MCF 10A (cell line): ENCODE measurements at regions of chr6 and their contacts with region 1.

Region 1: DNA sequence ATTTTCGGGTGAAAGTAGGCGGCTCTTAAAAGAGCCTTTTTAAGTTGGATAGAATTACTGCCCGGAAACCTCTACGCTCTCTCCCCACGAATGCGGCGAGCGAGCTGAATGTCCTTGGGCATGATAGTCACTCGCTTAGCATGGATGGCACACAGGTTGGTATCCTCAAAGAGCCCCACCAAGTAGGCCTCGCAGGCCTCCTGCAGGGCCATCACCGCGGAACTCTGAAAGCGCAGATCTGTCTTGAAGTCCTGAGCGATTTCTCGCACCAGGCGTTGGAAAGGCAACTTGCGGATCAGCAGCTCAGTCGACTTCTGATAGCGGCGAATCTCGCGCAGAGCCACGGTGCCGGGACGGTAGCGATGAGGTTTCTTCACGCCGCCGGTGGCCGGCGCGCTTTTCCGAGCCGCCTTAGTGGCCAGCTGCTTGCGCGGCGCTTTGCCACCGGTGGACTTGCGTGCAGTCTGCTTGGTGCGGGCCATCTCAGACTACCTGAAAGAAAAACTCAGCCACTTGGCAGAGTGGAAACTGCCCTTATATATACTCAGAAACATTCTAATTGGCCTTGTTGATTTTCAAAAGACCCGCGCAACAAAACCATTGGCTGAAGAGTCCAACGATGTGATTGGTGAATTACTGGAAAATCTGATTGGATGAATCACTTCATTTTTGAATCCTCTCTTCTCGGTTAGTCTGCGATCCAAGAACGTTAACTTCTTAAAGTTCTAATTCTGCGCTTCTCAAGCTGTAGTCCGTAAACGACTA is 93.9 kb upstream of the BTN3A2 start:
- DNase-seq: peak; percentile 97
- H3K4me3 Mint-ChIP-seq: no peak overlapping the region
- H3K27ac Mint-ChIP-seq: peak overlapping the region; percentile 54
- H3K4me1 Mint-ChIP-seq: peaks cover 6% of the 10 kb centered on the region
- H3K27me3 Mint-ChIP-seq: no peaks in the 10 kb centered on the region
- CTCF ChIP-seq: no peak

Region 2: GRCh38 chr6:26045065-26045927 is 225.8 kb before region 1 on chr6:
- CTCF ChIA-PET with region 1: no interaction called
- POLR2A ChIA-PET with region 1: interaction called, 13 read pairs
- intact Hi-C with region 1: no loop called
- DNase-seq: peak; percentile 95
- H3K4me3 Mint-ChIP-seq: peak overlapping the region; percentile 80
- H3K27ac Mint-ChIP-seq: peak overlapping the region; percentile 86
- H3K4me1 Mint-ChIP-seq: peaks cover 16% of the 10 kb centered on the region
- H3K27me3 Mint-ChIP-seq: no peaks in the 10 kb centered on the region
- CTCF ChIP-seq: no peak

Region 3: GRCh38 chr6:26196846-26197648 is 74.0 kb before region 1 on chr6:
- CTCF ChIA-PET with region 1: interaction called, 4 read pairs
- POLR2A ChIA-PET with region 1: interaction called, 245 read pairs
- intact Hi-C with region 1: no loop called
- DNase-seq: peak; percentile 94
- H3K4me3 Mint-ChIP-seq: peak overlapping the region; percentile 93
- H3K27ac Mint-ChIP-seq: peak overlapping the region; percentile 96
- H3K4me1 Mint-ChIP-seq: peaks cover 28% of the 10 kb centered on the region
- H3K27me3 Mint-ChIP-seq: no peaks in the 10 kb centered on the region
- CTCF ChIP-seq: no peak

Region 4: GRCh38 chr6:26243132-26243531 is 28.0 kb before region 1 on chr6:
- CTCF ChIA-PET with region 1: interaction called, 15 read pairs
- POLR2A ChIA-PET with region 1: interaction called, 197 read pairs
- intact Hi-C with region 1: no loop called
- DNase-seq: peak; percentile 14
- H3K4me3 Mint-ChIP-seq: no peak overlapping the region
- H3K27ac Mint-ChIP-seq: no peak overlapping the region
- H3K4me1 Mint-ChIP-seq: no peaks in the 10 kb centered on the region
- H3K27me3 Mint-ChIP-seq: no peaks in the 10 kb centered on the region
- CTCF ChIP-seq: no peak

Region 5: DNA sequence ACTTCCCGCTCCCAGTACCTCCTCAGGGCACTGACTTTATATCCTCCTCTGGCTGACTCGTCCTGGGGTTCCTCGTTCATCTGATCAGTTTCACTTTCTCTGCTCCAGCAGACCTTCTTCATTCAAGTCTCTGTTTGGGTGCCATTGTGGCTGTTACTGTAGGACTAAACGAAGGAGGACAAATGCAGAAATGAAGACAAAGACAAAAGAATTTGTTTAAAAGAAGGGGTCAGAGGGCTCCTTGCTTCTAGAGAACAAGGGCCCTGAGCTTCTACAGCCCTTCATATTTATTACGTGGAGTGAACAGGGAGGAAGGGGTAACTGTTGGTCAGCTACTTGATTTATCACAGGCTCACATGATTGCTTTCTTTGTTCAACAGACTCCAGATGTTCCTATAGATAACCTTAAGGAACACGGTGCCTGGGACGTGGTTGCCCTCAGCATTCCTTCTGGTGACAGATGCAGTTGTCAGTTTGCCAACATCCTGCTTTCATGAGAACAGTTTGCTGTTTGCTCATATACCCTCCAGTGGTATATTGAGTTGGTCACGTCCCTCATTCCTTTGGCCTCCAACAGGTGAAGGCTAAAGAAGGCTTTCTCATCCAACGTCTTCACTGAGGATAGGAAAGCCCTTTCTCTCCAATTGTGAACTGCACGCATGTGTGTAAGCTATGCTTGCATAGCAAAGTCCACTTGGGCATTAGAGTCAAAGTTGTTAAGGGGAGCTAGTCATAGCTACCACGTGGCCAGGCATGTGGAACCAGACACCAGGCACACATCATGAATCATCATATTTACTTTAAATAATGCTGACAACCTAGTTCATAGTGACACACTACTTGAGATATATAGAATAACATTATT is 24.8 kb after region 1 on chr6:
- CTCF ChIA-PET with region 1: interaction called, 4 read pairs
- POLR2A ChIA-PET with region 1: interaction called, 32 read pairs
- intact Hi-C with region 1: no loop called
- DNase-seq: peak; percentile 87
- H3K4me3 Mint-ChIP-seq: peak overlapping the region; percentile 63
- H3K27ac Mint-ChIP-seq: peak overlapping the region; percentile 81
- H3K4me1 Mint-ChIP-seq: peaks cover 22% of the 10 kb centered on the region
- H3K27me3 Mint-ChIP-seq: no peaks in the 10 kb centered on the region
- CTCF ChIP-seq: no peak

Region 6: DNA sequence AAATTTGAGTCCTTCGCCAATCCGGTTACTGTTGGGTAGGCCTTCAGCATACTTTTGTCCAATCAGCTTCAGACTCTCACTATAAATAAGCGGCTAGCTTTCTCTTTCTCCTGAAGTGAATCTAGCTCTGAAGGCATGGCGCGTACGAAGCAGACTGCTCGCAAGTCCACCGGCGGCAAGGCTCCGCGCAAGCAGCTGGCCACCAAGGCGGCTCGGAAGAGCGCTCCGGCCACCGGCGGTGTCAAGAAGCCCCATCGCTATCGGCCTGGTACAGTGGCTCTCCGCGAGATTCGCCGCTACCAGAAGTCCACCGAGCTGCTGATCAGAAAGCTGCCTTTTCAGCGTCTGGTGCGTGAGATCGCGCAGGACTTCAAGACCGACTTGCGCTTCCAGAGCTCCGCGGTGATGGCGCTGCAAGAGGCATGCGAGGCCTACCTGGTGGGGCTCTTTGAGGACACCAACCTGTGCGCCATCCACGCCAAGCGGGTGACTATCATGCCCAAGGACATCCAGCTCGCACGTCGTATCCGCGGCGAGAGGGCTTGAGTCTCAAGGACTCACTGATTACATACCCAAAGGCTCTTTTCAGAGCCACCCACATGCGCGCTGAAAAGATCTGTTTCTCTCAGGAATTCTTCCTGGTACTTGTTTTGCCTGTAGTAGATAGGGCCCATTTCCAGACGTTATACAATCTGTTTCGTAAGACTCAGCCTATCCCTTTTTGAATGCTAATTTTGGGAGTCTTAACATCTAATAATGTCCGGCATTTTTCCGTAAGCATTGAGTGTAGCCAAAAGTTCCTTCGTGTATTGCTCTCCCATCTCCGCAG is 1539.1 kb after region 1 on chr6:
- CTCF ChIA-PET with region 1: no interaction called
- POLR2A ChIA-PET with region 1: interaction called, 56 read pairs
- intact Hi-C with region 1: no loop called
- DNase-seq: peak; percentile 96
- H3K4me3 Mint-ChIP-seq: peak overlapping the region; percentile 86
- H3K27ac Mint-ChIP-seq: peak overlapping the region; percentile 94
- H3K4me1 Mint-ChIP-seq: peaks cover 20% of the 10 kb centered on the region
- H3K27me3 Mint-ChIP-seq: no peaks in the 10 kb centered on the region
- CTCF ChIP-seq: no peak